HEK293T (cell line): ENCODE measurements at regions of chr18 and their contacts with region 1.

Region 1: GRCh38 chr18:58761970-58762780 is 90.9 kb downstream of the MALT1 start:
- DNase-seq: no peak

Region 2: GRCh38 chr18:58529714-58530354 is 232.3 kb before region 1 on chr18:
- CTCF ChIA-PET with region 1: interaction called, 29 read pairs
- POLR2A ChIA-PET with region 1: no interaction called
- DNase-seq: peak; percentile 65

Region 3: DNA sequence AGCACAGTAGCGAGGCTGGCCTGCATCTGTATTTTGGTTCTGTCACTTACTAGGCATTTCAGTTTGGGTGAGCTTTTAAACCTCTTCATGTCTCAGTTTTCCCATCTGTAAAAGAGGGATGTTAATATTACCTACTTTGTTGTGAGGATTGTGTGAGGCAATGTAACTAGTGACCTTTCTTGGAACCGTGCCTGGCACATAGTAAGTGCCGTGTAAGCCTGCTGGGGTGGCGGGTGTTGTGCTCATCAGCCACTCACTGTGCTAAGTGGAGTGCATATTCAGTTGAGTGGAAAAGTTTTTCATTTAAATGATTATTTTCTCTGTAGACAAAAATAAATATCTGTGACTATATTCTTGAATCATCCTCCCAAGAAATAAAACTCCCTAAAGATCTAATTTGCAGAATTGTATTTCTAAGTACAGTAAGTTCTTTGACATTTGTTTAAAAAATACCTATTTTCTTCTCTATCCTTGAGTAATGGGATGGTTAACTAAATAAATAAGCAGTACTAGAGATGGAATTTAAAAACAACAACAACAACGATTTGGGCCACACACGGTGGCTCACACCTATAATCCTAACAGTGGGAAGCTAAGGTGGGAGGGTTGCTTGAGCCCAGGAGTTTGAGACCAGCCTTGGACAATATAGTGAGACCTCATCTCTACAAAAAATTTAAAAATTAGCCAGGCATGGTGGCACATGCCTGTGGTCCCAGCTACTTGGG is 34.2 kb before region 1 on chr18:
- CTCF ChIA-PET with region 1: no interaction called
- POLR2A ChIA-PET with region 1: no interaction called
- DNase-seq: no peak